ENCODE measurements at regions of chr2 and their contacts with region 1.

Region 1: GRCh38 chr2:164479460-164479859 is 141.8 kb downstream of the GRB14 start:
- DNase-seq: peak; percentile 13
- ATAC-seq: no peak

Region 2: GRCh38 chr2:163182764-163183354 is 1296.6 kb before region 1 on chr2:
- intact Hi-C with region 1: loop called in 1 of 2 experiments (anchors 5 kb)
- DNase-seq: no peak
- ATAC-seq: no peak

Measured in left cardiac atrium (tissue), 4 donors.